CD4-positive, alpha-beta T cell (primary cell): ENCODE measurements at regions of chr1 and their contacts with region 1.

Region 1: GRCh38 chr1:94463765-94464330 is 45.7 kb downstream of the ABCD3 start:
- DNase-seq: peak in 5 of 14 experiments; percentile 0 to 58 (median 34)
- ATAC-seq: peak; percentile 61
- H3K4me3 ChIP-seq: no peak overlapping the region
- H3K4me3 Mint-ChIP-seq: no peak overlapping the region
- H3K27ac ChIP-seq: no peak overlapping the region
- H3K27ac Mint-ChIP-seq: no peak overlapping the region
- H3K4me1 ChIP-seq: no peaks in the 10 kb centered on the region
- H3K4me1 Mint-ChIP-seq: peaks cover 10% of the 10 kb centered on the region
- H3K27me3 ChIP-seq: no peaks in the 10 kb centered on the region
- H3K27me3 Mint-ChIP-seq: no peaks in the 10 kb centered on the region
- CTCF ChIP-seq: peak; percentile 69

Region 2: DNA sequence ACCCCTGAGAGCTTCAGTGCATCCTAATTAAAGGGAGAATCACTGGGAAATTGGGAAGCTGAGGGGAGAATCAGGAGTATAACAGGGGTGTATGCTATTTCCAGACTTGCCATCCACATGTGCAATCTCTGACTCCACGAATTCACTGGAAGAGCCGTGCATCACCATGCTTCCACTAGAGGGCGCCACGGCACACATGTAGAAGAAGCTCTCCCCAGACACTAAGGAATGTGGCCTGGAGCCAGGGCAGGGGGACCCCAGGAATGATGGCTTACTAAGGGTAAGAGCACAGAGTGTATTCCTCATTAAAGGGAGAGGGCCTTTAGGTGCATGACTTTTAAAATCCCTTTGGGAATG is 424.4 kb before region 1 on chr1:
- CTCF ChIA-PET with region 1: no interaction called
- POLR2A ChIA-PET with region 1: no interaction called
- intact Hi-C with region 1: loop called in 1 of 2 experiments (anchors 1 kb)
- DNase-seq: peak; percentile 17 to 69 (median 36)
- ATAC-seq: no peak
- H3K4me3 ChIP-seq: no peak overlapping the region
- H3K4me3 Mint-ChIP-seq: no peak overlapping the region
- H3K27ac ChIP-seq: no peak overlapping the region
- H3K27ac Mint-ChIP-seq: no peak overlapping the region
- H3K4me1 ChIP-seq: no peaks in the 10 kb centered on the region
- H3K4me1 Mint-ChIP-seq: no peaks in the 10 kb centered on the region
- H3K27me3 ChIP-seq: peaks cover 0 to 6% of the 10 kb centered on the region in 2 experiments
- H3K27me3 Mint-ChIP-seq: peaks cover 40% of the 10 kb centered on the region
- CTCF ChIP-seq: peak; percentile 74

Region 3: GRCh38 chr1:94045465-94046056 is 418.3 kb before region 1 on chr1:
- CTCF ChIA-PET with region 1: interaction called, 3 read pairs
- POLR2A ChIA-PET with region 1: no interaction called
- intact Hi-C with region 1: loop called in 1 of 2 experiments (anchors 5 kb)
- DNase-seq: peak in 8 of 14 experiments; percentile 2 to 36 (median 18)
- ATAC-seq: peak; percentile 44
- H3K4me3 ChIP-seq: peak overlapping the region; percentile 12
- H3K4me3 Mint-ChIP-seq: peak overlapping the region; percentile 38
- H3K27ac ChIP-seq: no peak overlapping the region
- H3K27ac Mint-ChIP-seq: no peak overlapping the region
- H3K4me1 ChIP-seq: peaks cover 6% of the 10 kb centered on the region
- H3K4me1 Mint-ChIP-seq: no peaks in the 10 kb centered on the region
- H3K27me3 ChIP-seq: peaks cover 4 to 6% of the 10 kb centered on the region in 2 experiments
- H3K27me3 Mint-ChIP-seq: peaks cover 31% of the 10 kb centered on the region
- CTCF ChIP-seq: peak; percentile 55

Region 4: GRCh38 chr1:94061513-94062443 is 402.1 kb before region 1 on chr1:
- CTCF ChIA-PET with region 1: no interaction called
- POLR2A ChIA-PET with region 1: no interaction called
- intact Hi-C with region 1: loop called in 1 of 2 experiments (anchors 2 kb)
- DNase-seq: peak in 5 of 14 experiments; percentile 1 to 52 (median 15)
- ATAC-seq: peak; percentile 70
- H3K4me3 ChIP-seq: no peak overlapping the region
- H3K4me3 Mint-ChIP-seq: no peak overlapping the region
- H3K27ac ChIP-seq: no peak overlapping the region
- H3K27ac Mint-ChIP-seq: no peak overlapping the region
- H3K4me1 ChIP-seq: no peaks in the 10 kb centered on the region
- H3K4me1 Mint-ChIP-seq: no peaks in the 10 kb centered on the region
- H3K27me3 ChIP-seq: peaks cover 0 to 6% of the 10 kb centered on the region in 2 experiments
- H3K27me3 Mint-ChIP-seq: peaks cover 38% of the 10 kb centered on the region
- CTCF ChIP-seq: peak; percentile 42

Region 5: GRCh38 chr1:94383966-94384408 is 79.9 kb before region 1 on chr1:
- CTCF ChIA-PET with region 1: no interaction called
- POLR2A ChIA-PET with region 1: no interaction called
- intact Hi-C with region 1: no loop called
- DNase-seq: no peak
- ATAC-seq: no peak
- H3K4me3 ChIP-seq: no peak overlapping the region
- H3K4me3 Mint-ChIP-seq: peak overlapping the region; percentile 78
- H3K27ac ChIP-seq: no peak overlapping the region
- H3K27ac Mint-ChIP-seq: peak overlapping the region; percentile 78
- H3K4me1 ChIP-seq: peaks cover 14% of the 10 kb centered on the region
- H3K4me1 Mint-ChIP-seq: peaks cover 33% of the 10 kb centered on the region
- H3K27me3 ChIP-seq: no peaks in the 10 kb centered on the region
- H3K27me3 Mint-ChIP-seq: no peaks in the 10 kb centered on the region
- CTCF ChIP-seq: no peak